Left ventricle myocardium superior (tissue), 1 donor: ENCODE measurements at regions of chr15 and their contacts with region 1.

Region 1: GRCh38 chr15:94666561-94666960 is 435.2 kb downstream of the MCTP2 start:
- DNase-seq: no peak
- ATAC-seq: no peak

Region 2: GRCh38 chr15:95291898-95292472 is 625.4 kb after region 1 on chr15:
- intact Hi-C with region 1: loop called (anchors 10 kb)
- DNase-seq: no peak
- ATAC-seq: peak; percentile 45

Region 3: GRCh38 chr15:95459273-95459672 is 792.7 kb after region 1 on chr15:
- intact Hi-C with region 1: no loop called
- DNase-seq: no peak
- ATAC-seq: peak; percentile 54